PC-3 (cell line): ENCODE measurements at regions of chr6 and their contacts with region 1.

Region 1: DNA sequence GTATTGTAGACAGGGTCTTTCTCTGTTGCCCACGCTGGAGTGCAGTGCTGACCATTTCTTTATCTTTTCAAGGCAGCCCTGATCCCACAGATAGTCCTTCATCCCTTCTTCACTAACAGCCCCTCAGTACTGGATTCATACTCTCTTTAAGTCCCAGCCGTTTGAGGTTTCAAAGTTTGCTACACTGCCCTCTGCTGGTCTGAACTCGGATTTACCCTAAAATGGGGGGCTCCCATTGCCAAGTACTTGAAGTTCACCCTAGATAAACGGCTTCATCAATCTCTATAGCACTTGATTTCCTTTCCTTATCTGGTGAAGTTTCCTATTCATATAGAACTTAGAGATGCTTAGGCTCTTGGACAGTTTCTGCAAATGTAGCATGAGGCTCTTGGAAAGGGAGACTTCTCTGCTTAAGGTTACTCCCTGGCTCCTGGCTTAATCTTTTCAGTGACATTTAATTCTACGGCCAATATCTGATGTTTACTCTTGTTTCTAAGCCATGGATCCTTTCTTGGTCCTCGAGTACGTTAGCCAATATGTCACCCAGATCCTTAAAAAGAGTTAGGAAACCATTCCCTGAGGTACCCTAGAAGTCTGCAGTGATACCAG is 21.4 kb upstream of the PREP start:
- DNase-seq: peak; percentile 70
- ATAC-seq: peak; percentile 61; the same call in 1 of the 2 replicates
- H3K4me3 ChIP-seq: no peak overlapping the region
- H3K27ac ChIP-seq: no peak overlapping the region
- H3K4me1 ChIP-seq: peaks cover 21% of the 10 kb centered on the region
- H3K27me3 ChIP-seq: no peaks in the 10 kb centered on the region
- CTCF ChIP-seq: peak; percentile 77

Region 2: DNA sequence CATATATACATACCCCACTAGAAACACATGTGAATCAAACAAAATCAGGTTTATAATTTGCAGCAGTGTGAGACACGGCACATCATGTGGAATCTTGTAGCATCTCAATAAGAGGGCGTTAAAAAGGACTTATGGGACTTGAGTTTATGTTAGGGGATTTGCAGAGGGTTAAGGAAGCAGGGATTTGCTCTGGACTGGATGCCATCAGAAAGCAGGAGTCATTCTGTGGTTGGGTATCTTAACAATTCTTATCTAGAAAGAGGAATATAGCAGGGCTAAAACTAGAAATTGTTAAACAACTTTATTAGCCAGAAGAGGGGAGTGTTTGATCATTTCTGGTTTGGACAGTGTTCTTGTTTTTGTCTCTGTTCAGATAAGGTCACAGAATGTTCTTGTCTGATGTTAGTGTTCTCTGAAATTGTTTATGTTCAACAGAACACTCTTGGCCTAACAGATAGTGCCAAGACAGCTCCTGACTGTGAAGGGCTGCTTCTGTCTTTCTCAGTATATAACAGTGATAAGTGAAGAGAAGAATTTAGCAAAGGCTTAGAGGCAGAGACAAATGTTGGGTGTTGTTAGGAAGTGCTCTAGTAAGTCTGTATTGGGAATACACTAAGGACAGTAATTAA is 428.2 kb before region 1 on chr6:
- CTCF ChIA-PET with region 1: no interaction called
- POLR2A ChIA-PET with region 1: no interaction called
- intact Hi-C with region 1: loop called (anchors 5 kb)
- DNase-seq: peak; percentile 58
- ATAC-seq: peak; percentile 71
- H3K4me3 ChIP-seq: no peak overlapping the region
- H3K27ac ChIP-seq: no peak overlapping the region
- H3K4me1 ChIP-seq: no peaks in the 10 kb centered on the region
- H3K27me3 ChIP-seq: no peaks in the 10 kb centered on the region
- CTCF ChIP-seq: peak; percentile 54

Region 3: DNA sequence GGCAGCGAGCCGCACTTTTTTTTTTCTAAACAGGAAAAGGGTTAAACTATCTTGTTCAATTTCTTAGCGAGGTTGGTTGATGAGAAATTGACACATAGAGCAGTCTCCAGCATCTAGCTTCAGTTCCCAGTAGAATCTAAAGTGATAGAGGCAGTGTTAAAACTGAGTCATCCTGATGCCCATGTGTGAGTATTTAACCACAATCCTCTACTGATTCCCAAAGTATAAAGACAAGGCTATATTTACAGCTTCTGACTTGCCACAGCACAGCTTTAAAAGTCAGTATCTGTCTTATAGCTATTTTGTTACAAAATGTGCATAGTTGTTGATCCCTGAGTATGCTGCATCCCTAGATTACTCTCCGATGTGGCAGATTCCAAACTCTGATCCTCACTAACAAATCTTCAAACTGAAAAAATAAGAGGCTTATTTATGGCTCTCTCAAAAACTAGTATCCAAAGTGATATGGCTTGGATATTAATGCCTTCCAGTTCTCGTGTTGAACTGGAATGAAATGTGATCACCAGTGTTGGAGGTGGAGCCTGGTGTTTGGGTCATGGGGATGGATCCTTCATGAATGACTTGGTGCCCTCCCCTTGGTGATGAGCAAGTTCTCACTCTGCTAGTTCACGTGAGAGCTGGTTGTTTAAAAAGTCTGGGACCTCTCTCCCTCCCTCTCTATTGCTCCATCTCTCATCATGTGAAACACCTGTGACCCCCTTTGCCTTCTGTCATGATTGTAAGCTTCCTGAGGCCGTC is 231.4 kb before region 1 on chr6:
- CTCF ChIA-PET with region 1: no interaction called
- POLR2A ChIA-PET with region 1: interaction called, 19 read pairs
- intact Hi-C with region 1: no loop called
- DNase-seq: peak; percentile 42
- ATAC-seq: peak; percentile 43; the same call in 1 of the 2 replicates
- H3K4me3 ChIP-seq: no peak overlapping the region
- H3K27ac ChIP-seq: no peak overlapping the region
- H3K4me1 ChIP-seq: peaks cover 3% of the 10 kb centered on the region; the same call in 1 of the 2 replicates
- H3K27me3 ChIP-seq: no peaks in the 10 kb centered on the region
- CTCF ChIP-seq: no peak

Region 4: GRCh38 chr6:105226598-105227294 is 197.5 kb before region 1 on chr6:
- CTCF ChIA-PET with region 1: no interaction called
- POLR2A ChIA-PET with region 1: no interaction called
- intact Hi-C with region 1: no loop called
- DNase-seq: no peak
- ATAC-seq: no peak
- H3K4me3 ChIP-seq: no peak overlapping the region
- H3K27ac ChIP-seq: no peak overlapping the region
- H3K4me1 ChIP-seq: no peaks in the 10 kb centered on the region
- H3K27me3 ChIP-seq: no peaks in the 10 kb centered on the region
- CTCF ChIP-seq: no peak

Region 5: GRCh38 chr6:105317607-105318533 is 106.4 kb before region 1 on chr6:
- CTCF ChIA-PET with region 1: no interaction called
- POLR2A ChIA-PET with region 1: no interaction called
- intact Hi-C with region 1: loop called (anchors 5 kb)
- DNase-seq: peak; percentile 61
- ATAC-seq: peak; percentile 72
- H3K4me3 ChIP-seq: peak overlapping the region; percentile 30; the same call in 1 of the 2 replicates
- H3K27ac ChIP-seq: peak overlapping the region; percentile 90
- H3K4me1 ChIP-seq: peaks cover 33% of the 10 kb centered on the region
- H3K27me3 ChIP-seq: no peaks in the 10 kb centered on the region
- CTCF ChIP-seq: peak; percentile 74

Region 6: GRCh38 chr6:105363100-105363754 is 61.1 kb before region 1 on chr6:
- CTCF ChIA-PET with region 1: no interaction called
- POLR2A ChIA-PET with region 1: no interaction called
- intact Hi-C with region 1: loop called (anchors 5 kb)
- DNase-seq: peak; percentile 52
- ATAC-seq: no peak
- H3K4me3 ChIP-seq: no peak overlapping the region
- H3K27ac ChIP-seq: no peak overlapping the region
- H3K4me1 ChIP-seq: peaks cover 17% of the 10 kb centered on the region
- H3K27me3 ChIP-seq: no peaks in the 10 kb centered on the region
- CTCF ChIP-seq: peak; percentile 62